ENCODE measurements at regions of chr1 and their contacts with region 1.

Region 1: DNA sequence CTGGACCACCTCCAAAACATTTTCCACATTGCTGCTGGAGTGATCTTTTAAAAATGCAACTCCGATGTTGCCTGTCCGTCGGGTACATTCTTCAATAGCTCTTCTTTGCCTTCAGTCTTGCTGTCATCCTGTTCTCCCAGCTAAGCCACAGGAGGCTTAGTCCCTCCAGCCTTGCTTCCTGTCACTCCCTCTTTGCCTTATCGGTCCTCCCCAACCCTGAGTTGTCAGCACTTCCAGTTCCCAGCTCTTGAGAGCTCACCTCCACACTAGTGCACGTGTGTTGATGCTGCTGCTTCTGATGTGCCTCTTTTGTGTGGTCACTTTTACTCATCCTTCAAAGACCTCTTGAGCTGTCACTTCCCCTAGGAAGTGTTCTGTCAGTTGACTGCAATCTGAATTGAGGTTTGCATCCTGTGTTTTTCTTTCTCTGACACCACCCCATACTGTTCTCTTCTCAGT is 15.3 kb downstream of the UCK2 start:
- DNase-seq: peak; percentile 58
- H3K4me3 Mint-ChIP-seq: no peak overlapping the region
- H3K27ac Mint-ChIP-seq: no peak overlapping the region
- H3K4me1 Mint-ChIP-seq: peaks cover 24% of the 10 kb centered on the region
- H3K27me3 Mint-ChIP-seq: no peaks in the 10 kb centered on the region

Region 2: DNA sequence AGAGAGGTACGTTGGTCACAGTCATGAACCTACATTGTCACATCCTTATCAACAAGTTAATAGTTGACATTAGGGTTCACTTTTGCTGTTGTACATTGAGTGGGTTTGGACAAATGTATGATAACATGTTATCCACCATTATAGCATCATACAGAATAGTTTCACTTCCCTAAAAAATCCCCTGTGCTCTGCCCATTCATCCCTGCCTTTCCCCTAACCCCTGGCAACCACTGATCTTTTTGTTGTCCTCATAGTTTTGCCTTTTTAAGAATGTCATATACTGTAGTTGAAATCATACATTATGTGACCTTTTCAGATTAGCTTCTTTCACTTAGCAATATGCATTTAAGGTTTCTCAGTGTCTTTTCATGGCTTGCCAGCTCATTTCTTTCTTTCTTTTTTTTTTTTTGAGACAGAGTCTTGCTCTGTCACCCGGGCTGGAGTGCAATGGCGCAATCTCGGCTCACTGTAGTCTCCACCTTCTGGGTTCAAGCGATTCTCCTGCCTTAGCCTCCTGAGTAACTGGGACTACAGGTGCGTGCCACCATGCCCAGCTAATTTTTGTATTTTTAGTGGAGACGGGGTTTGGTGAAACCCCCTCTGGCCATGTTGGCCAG is 35.3 kb after region 1 on chr1:
- CTCF ChIA-PET with region 1: interaction called, 3 read pairs
- intact Hi-C with region 1: loop called (anchors 5 kb)
- DNase-seq: peak; percentile 31
- H3K4me3 Mint-ChIP-seq: no peak overlapping the region
- H3K27ac Mint-ChIP-seq: no peak overlapping the region
- H3K4me1 Mint-ChIP-seq: peaks cover 44% of the 10 kb centered on the region
- H3K27me3 Mint-ChIP-seq: peaks cover 1% of the 10 kb centered on the region

Region 3: GRCh38 chr1:166705376-166706289 is 862.9 kb after region 1 on chr1:
- CTCF ChIA-PET with region 1: no interaction called
- intact Hi-C with region 1: loop called (anchors 5 kb)
- DNase-seq: no peak
- H3K4me3 Mint-ChIP-seq: no peak overlapping the region
- H3K27ac Mint-ChIP-seq: peak overlapping the region; percentile 7
- H3K4me1 Mint-ChIP-seq: peaks cover 12% of the 10 kb centered on the region
- H3K27me3 Mint-ChIP-seq: peaks cover 37% of the 10 kb centered on the region

Measured in activated naive CD4-positive, alpha-beta T cell treated with anti-CD3 and anti-CD28 coated beads for 36 hours (primary cell).